HEK293 (cell line): ENCODE measurements at regions of chr6 and their contacts with region 1.

Region 1: DNA sequence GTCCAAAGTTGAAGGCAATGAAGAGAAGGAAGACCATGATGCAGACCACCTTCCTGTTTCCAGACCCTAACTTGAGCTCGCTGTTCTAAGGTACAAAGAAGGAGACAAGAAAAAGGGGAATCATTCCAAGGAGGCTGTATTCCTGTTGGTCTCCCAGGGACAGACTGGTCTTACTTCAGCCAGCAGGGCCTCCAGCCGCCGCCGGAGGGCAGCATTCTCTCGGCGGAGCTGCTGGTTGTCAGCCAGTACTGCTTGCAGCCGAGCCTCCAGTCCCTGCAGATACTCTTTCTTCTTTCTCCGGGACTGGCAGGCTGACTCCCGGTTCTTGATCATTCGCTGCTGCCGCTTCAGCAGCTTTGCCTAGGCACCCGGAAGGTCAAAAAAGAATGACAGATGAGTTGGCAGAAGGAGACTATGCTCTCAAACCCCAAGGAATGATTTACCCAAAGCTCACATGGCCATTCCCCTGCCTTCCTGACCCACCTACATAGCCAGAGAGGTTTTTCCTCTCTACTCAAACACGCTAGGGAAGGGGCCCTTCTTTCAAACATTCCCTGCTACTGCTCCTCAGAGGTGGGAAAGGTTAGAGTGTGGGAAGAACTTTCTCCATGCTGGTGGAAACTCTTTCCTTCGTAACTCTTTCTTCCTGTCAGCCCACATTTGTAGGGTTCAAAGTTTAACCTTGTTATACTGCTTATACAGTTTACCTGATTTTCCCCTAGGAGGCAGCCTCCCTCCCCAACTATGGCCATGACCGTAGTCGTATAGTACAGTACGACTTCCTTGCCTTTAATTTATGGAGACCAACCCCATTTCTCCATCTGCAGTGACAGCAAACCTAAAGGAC is 9.0 kb downstream of the ATF6B start:
- H3K4me3 ChIP-seq: no peak overlapping the region
- H3K27ac ChIP-seq: no peak overlapping the region
- H3K4me1 ChIP-seq: no peaks in the 10 kb centered on the region
- CTCF ChIP-seq: peak; percentile 87

Region 2: GRCh38 chr6:31652925-31653718 is 465.9 kb before region 1 on chr6:
- CTCF ChIA-PET with region 1: no interaction called
- POLR2A ChIA-PET with region 1: no interaction called
- H3K4me3 ChIP-seq: peak overlapping the region; percentile 85
- H3K27ac ChIP-seq: peak overlapping the region; percentile 87
- H3K4me1 ChIP-seq: 0 out of 2 replicates have a peak, but pooled peaks cover 6% of the 10 kb centered on the region
- CTCF ChIP-seq: peak; percentile 35; the same call in 1 of the 2 replicates

Region 3: GRCh38 chr6:32058511-32058963 is 60.5 kb before region 1 on chr6:
- CTCF ChIA-PET with region 1: interaction called, 15 read pairs
- POLR2A ChIA-PET with region 1: no interaction called
- H3K4me3 ChIP-seq: no peak overlapping the region
- H3K27ac ChIP-seq: no peak overlapping the region
- H3K4me1 ChIP-seq: no peaks in the 10 kb centered on the region
- CTCF ChIP-seq: no peak

Region 4: GRCh38 chr6:32108094-32108627 is 10.8 kb before region 1 on chr6:
- CTCF ChIA-PET with region 1: interaction called, 45 read pairs
- POLR2A ChIA-PET with region 1: interaction called, 5 read pairs
- H3K4me3 ChIP-seq: no peak overlapping the region
- H3K27ac ChIP-seq: no peak overlapping the region
- H3K4me1 ChIP-seq: peaks cover 9% of the 10 kb centered on the region; the same call in 1 of the 2 replicates
- CTCF ChIP-seq: no peak

Region 5: DNA sequence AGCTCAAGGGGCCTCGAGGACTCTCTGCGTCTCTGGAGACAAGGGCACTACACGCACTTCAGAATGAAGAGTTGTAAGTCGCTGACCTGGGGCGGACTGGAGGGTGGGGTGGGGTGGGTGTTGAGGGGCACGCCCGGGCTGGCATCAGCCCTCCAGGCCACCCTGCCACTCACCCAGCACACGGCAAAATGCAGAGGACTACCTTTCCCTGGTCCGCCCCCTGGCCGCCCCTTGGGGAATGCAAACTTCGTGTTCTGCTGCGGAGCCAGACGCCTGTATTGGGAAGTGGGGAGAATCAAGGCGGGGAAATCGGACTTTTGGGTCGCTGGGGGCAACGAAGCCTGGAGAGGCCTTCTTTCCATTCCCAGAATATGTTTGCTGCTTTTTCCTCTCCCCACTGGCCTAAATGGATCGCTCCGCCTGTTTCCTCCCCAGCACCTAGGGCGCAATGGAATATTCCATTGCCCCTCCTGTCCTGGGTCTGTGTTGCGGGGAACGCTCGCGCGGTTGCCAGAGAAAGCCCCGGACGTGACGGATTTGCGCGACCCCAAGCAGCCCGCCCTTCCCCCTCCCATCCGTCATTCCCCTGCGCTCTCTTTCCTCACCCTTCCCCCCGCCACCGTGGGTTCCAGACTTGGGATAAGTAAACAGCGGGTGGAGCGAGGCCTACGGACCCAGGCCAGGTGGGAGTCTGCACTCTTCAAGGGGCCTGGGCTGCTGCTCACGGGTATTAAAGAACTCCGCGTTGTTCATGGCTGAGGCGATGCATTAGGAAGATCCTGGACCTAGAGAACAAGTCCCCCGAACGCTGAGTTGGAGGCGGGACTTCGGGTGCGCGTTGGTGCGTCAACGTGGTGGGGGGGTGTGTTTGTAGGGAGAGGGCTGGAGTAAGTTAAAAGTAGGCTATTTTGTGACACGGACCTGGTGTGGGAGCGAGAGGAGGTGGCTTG is 34.8 kb after region 1 on chr6 and contains the start of gene PPT2:
- CTCF ChIA-PET with region 1: interaction called, 21 read pairs
- POLR2A ChIA-PET with region 1: interaction called, 4 read pairs
- H3K4me3 ChIP-seq: peak within 1 kb of the TSS; percentile 66
- H3K27ac ChIP-seq: peak within 1 kb of the TSS; percentile 80
- H3K4me1 ChIP-seq: peaks cover 7% of the 10 kb centered on the region; the same call in 1 of the 2 replicates
- CTCF ChIP-seq: 0 out of 2 replicates have a peak, but pooled peaks have one; percentile 37

Region 6: GRCh38 chr6:32177788-32178546 is 59.0 kb after region 1 on chr6 and contains the start of gene RNF5:
- CTCF ChIA-PET with region 1: interaction called, 15 read pairs
- POLR2A ChIA-PET with region 1: interaction called, 3 read pairs
- H3K4me3 ChIP-seq: peak within 1 kb of the TSS; percentile 68
- H3K27ac ChIP-seq: peak within 1 kb of the TSS; percentile 80
- H3K4me1 ChIP-seq: peaks cover 14% of the 10 kb centered on the region
- CTCF ChIP-seq: no peak

Region 7: GRCh38 chr6:32462609-32463008 is 343.6 kb after region 1 on chr6:
- CTCF ChIA-PET with region 1: no interaction called
- POLR2A ChIA-PET with region 1: no interaction called
- H3K4me3 ChIP-seq: no peak overlapping the region
- H3K27ac ChIP-seq: no peak overlapping the region
- H3K4me1 ChIP-seq: no peaks in the 10 kb centered on the region
- CTCF ChIP-seq: no peak